ENCODE measurements at regions of chr13 and their contacts with region 1.

Region 1: GRCh38 chr13:100573121-100573520 is 15.5 kb downstream of the GGACT start:
- DNase-seq: peak; percentile 67 to 89
- ATAC-seq: peak; percentile 82 to 96 (median 89)
- H3K4me3 ChIP-seq: no peak overlapping the region
- H3K4me3 Mint-ChIP-seq: no peak overlapping the region
- H3K27ac ChIP-seq: no peak overlapping the region
- H3K27ac Mint-ChIP-seq: no peak overlapping the region
- H3K4me1 ChIP-seq: no peaks in the 10 kb centered on the region
- H3K4me1 Mint-ChIP-seq: peaks cover 19 to 26% of the 10 kb centered on the region in 2 donors
- H3K27me3 ChIP-seq: no peaks in the 10 kb centered on the region
- H3K27me3 Mint-ChIP-seq: no peaks in the 10 kb centered on the region
- CTCF ChIP-seq: peak; percentile 95

Region 2: GRCh38 chr13:100588331-100589177 is 15.4 kb after region 1 on chr13 and contains the start of gene GGACT:
- intact Hi-C with region 1: loop called (anchors 1 kb)
- DNase-seq: peak; percentile 81 to 91
- ATAC-seq: peak; percentile 96
- H3K4me3 ChIP-seq: peak within 1 kb of the TSS; percentile 63
- H3K4me3 Mint-ChIP-seq: peak within 1 kb of the TSS; percentile 92
- H3K27ac ChIP-seq: peak within 1 kb of the TSS; percentile 78
- H3K27ac Mint-ChIP-seq: peak within 1 kb of the TSS; percentile 86 to 91
- H3K4me1 ChIP-seq: peaks cover 15% of the 10 kb centered on the region
- H3K4me1 Mint-ChIP-seq: peaks cover 25 to 26% of the 10 kb centered on the region in 2 donors
- H3K27me3 ChIP-seq: no peaks in the 10 kb centered on the region
- H3K27me3 Mint-ChIP-seq: no peaks in the 10 kb centered on the region
- CTCF ChIP-seq: peak; percentile 82
- total RNA-seq, gene GGACT: 8.8 to 16.4 (median 15.1) TPM

Region 3: DNA sequence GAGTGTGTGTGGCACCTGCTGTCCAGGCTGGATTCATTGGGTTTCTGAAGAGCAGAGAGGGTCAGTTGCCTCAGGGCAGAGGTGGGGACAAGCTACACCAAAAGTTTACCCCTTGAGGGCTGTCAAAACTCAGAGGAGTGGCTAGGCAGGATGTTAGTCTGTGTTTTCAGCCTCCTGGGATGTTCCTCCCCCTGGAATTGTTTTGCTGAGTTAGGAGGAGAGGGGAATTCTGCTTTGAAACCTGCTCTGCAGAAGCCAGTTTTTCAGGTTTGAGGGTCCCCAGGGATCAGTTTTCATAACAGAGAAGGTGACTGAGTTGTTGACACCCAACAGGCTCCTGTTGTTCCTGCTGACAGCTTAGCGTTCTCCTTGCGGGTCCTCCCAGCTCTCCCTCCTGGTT is 223.3 kb after region 1 on chr13:
- intact Hi-C with region 1: no loop called
- DNase-seq: no peak
- ATAC-seq: no peak
- H3K4me3 ChIP-seq: no peak overlapping the region
- H3K4me3 Mint-ChIP-seq: no peak overlapping the region
- H3K27ac ChIP-seq: no peak overlapping the region
- H3K27ac Mint-ChIP-seq: no peak overlapping the region
- H3K4me1 ChIP-seq: no peaks in the 10 kb centered on the region
- H3K4me1 Mint-ChIP-seq: no peaks in the 10 kb centered on the region
- H3K27me3 ChIP-seq: no peaks in the 10 kb centered on the region
- H3K27me3 Mint-ChIP-seq: peaks cover 12 to 15% of the 10 kb centered on the region in 2 donors
- CTCF ChIP-seq: no peak

Region 4: DNA sequence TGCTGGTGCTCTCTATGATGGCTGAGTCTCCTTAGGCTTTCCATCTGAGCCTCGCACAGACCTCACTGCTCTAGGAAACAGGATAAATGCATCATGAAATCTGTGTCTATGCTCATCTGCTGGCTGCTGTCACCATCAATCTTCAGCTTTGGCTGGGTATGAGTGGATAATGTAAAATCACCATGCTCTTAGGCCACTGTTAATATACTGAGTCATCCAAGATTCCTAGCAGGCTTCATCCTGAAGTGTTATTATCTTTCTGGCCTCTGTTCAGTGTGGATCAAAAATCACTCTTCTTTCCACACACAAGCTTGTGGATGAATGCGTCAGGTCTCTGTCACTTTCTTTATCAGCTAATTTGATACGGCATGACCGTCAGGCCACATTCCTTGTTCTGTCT is 525.8 kb after region 1 on chr13:
- intact Hi-C with region 1: loop called (anchors 1 kb)
- DNase-seq: no peak
- ATAC-seq: no peak
- H3K4me3 ChIP-seq: no peak overlapping the region
- H3K4me3 Mint-ChIP-seq: no peak overlapping the region
- H3K27ac ChIP-seq: no peak overlapping the region
- H3K27ac Mint-ChIP-seq: no peak overlapping the region
- H3K4me1 ChIP-seq: no peaks in the 10 kb centered on the region
- H3K4me1 Mint-ChIP-seq: no peaks in the 10 kb centered on the region
- H3K27me3 ChIP-seq: no peaks in the 10 kb centered on the region
- H3K27me3 Mint-ChIP-seq: peaks cover 17 to 25% of the 10 kb centered on the region in 2 donors
- CTCF ChIP-seq: no peak

Region 5: GRCh38 chr13:101127741-101128353 is 554.7 kb after region 1 on chr13:
- intact Hi-C with region 1: loop called (anchors 1 kb)
- DNase-seq: peak in 1 of 2 donors; percentile 63
- ATAC-seq: peak; percentile 63 to 83 (median 64)
- H3K4me3 ChIP-seq: no peak overlapping the region
- H3K4me3 Mint-ChIP-seq: no peak overlapping the region
- H3K27ac ChIP-seq: no peak overlapping the region
- H3K27ac Mint-ChIP-seq: no peak overlapping the region
- H3K4me1 ChIP-seq: no peaks in the 10 kb centered on the region
- H3K4me1 Mint-ChIP-seq: no peaks in the 10 kb centered on the region
- H3K27me3 ChIP-seq: no peaks in the 10 kb centered on the region
- H3K27me3 Mint-ChIP-seq: peaks cover 8 to 32% of the 10 kb centered on the region in 2 donors
- CTCF ChIP-seq: peak; percentile 70